BJ (cell line): ENCODE measurements at regions of chr13 and their contacts with region 1.

Region 1: DNA sequence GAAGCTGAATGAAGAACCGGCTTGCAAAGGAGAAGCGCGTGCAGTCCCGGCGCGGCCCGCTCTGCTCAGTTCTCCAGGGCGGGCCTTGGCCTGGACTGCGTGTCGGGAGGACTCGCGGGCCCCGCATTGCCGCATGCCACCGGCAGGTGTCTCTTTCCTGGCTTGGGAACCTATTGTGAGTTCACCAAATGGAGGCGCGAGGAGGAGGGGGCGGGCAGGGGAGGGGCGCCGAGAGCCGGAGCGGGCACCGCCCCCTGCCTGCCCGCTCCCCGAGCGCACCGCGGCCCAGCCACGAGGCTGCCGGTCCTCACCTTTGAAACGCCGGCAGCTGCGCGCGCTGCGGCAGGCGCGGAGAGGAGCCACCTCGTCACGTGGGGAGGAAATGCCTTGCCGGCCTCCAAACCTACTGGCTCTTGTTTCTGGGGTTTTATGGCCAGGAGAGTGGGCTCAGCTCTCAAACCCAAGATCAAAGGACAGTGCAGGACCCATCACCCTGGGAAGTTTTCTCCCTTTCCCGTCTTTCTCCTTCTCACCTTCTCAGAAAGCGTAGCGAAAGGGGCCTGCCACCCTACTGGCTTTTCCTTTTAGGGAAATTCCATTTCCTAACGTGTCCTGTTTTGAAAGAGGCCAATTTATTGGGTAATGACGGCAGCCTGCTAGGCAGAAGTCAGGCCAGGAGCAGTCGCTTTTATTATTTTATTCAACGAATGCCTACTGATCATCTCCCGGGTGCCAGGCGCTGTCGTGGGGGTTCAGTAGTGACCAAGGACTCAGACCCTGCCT is 13.8 kb upstream of the UBE2L5 start:
- DNase-seq: no peak
- H3K4me3 ChIP-seq: peak overlapping the region; percentile 7
- H3K27me3 ChIP-seq: no peaks in the 10 kb centered on the region
- CTCF ChIP-seq: peak; percentile 74

Region 2: DNA sequence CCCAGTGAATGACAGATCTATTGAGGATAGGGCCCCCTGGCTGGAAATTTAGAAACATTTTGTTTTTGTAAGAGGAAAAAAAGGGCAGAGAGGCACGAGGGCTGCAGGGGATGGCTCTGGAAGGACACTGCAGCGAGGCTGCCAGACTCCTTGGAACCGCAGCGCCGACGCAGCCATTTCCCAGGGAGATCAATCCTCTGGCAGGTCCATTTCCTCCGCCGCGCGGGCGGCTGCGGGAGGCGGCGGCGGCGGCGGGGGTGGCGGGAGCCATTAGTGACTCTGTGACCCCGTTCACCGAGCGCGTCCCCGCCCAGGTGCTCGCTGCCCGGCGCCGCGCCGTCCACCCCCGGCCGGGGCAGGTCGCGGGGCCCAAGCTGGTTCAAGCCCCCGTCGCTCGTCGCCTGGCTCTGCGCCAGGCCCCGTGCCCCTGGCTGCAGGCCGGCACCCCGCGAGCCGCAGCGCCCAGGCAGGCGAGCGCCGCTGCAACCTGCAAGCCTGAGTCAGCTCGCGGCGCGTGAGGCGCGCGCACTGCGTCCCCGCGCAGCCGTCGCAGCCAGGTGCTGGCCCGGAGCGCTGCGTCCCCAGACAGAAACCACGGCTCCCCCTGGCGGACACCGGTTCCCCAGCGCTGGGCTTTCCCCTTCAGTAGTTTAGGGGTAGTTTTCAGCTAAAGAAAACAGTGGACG is 293.8 kb before region 1 on chr13:
- CTCF ChIA-PET with region 1: no interaction called
- POLR2A ChIA-PET with region 1: no interaction called
- DNase-seq: no peak
- H3K4me3 ChIP-seq: peak overlapping the region; percentile 43
- H3K27me3 ChIP-seq: no peaks in the 10 kb centered on the region
- CTCF ChIP-seq: peak; percentile 90

Region 3: DNA sequence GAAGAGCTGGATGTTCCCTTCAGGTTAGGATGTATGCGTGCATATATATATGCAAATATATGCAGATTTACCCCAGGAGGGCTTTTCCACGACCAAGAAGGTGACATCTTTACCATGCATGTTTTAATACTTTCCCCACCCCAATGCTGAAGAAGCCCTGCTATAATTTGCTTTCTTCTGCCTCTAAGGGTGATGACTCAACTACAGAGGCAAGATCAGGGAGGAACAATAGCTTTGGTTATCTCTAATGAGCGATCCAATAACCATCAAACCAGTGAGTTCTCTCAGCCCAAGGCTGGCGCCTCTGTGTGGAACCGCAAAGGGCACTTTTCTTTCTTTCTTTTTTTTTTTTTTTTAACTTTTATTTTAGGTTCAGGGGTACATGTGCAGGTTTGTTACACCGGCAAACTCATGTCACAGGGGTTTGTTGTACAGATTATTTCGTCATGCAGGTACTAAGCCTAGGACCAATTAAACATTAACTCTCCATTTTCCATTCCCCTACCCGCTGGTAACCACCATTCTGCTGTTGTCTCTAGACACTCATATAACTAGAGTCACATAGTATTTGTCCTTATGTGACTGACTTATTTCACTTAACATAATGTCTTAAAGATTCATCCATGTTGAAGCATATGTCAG is 12.0 kb before region 1 on chr13:
- CTCF ChIA-PET with region 1: interaction called, 15 read pairs
- POLR2A ChIA-PET with region 1: no interaction called
- DNase-seq: no peak
- H3K4me3 ChIP-seq: no peak overlapping the region
- H3K27me3 ChIP-seq: no peaks in the 10 kb centered on the region
- CTCF ChIP-seq: no peak

Region 4: DNA sequence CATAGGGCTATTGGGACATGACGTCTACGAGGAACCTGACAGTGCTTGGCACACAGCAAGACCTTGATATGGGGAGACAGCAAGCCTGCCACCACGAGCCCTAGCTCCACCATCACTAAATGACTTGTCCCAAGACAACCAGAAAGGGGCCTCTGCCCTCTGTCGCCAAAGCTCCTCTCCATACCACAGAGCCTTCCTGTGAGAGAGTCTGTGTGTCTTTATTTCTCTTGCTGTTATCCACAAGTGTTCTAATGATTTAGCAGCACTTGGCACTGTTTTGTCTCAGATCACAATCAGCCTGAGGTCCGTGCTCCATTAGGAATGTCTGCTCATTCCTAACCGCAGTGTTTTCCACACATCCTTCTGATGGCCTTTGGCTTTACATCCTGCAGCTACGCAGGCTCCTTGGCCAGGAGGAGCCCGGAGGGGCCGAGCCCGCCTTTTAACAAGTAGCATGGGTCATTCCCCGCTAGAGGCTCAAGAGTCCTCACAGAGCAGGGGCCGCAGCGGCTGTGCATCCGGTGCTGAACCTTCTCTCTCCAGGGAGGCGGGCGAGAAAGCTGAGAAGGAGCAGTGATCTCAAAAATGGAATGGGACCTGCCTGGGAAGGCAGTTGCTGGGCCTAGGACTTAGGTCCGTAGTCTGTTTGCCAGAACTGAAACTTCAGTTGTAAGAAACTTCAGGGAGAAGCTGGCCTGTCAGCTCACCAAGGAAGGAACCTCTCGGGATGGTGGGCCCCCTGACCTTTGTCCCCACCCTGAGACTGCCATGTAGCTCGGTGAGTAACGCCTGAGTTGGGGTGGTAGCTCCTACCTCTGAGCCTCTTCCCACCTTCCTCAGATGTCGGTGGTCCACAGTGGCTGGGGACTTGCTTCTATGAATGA is 118.3 kb after region 1 on chr13:
- CTCF ChIA-PET with region 1: no interaction called
- POLR2A ChIA-PET with region 1: no interaction called
- DNase-seq: no peak
- H3K4me3 ChIP-seq: no peak overlapping the region
- H3K27me3 ChIP-seq: no peaks in the 10 kb centered on the region
- CTCF ChIP-seq: 0 out of 2 replicates have a peak, but pooled peaks have one; percentile 10

Region 5: DNA sequence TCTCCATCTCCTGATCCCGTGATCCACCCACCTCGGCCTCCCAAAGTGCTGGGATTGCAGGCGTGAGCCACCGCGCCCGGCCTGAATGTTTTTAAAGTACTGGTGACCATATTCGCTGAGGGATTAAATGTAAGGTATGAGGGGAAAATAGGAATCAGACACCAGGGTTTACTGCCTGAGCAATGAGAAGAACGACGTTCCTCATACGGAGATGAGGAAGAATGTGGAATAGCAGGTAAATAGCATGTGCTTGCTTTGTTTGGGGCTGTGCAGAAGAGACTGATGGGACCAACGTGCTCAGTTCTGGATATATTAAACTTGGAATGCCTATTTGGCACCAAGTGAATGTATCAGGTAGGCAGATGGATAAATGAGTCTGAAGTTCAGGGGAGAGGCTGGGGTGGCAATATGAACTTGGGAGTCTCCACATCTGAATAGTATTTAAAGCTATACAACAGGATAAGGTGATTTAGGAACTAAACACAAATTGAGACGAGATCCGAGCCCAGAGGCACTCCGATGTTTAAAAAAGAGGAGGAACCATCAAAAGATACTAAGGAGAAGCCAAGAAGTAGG is 196.5 kb after region 1 on chr13:
- CTCF ChIA-PET with region 1: no interaction called
- POLR2A ChIA-PET with region 1: no interaction called
- DNase-seq: no peak
- H3K4me3 ChIP-seq: no peak overlapping the region
- H3K27me3 ChIP-seq: no peaks in the 10 kb centered on the region
- CTCF ChIP-seq: no peak

Region 6: GRCh38 chr13:30963791-30964190 is 555.3 kb after region 1 on chr13:
- CTCF ChIA-PET with region 1: no interaction called
- POLR2A ChIA-PET with region 1: no interaction called
- DNase-seq: no peak
- H3K4me3 ChIP-seq: no peak overlapping the region
- H3K27me3 ChIP-seq: no peaks in the 10 kb centered on the region; the same call in 1 of the 2 replicates
- CTCF ChIP-seq: no peak